ENCODE measurements at regions of chr16 and their contacts with region 1.

Region 1: DNA sequence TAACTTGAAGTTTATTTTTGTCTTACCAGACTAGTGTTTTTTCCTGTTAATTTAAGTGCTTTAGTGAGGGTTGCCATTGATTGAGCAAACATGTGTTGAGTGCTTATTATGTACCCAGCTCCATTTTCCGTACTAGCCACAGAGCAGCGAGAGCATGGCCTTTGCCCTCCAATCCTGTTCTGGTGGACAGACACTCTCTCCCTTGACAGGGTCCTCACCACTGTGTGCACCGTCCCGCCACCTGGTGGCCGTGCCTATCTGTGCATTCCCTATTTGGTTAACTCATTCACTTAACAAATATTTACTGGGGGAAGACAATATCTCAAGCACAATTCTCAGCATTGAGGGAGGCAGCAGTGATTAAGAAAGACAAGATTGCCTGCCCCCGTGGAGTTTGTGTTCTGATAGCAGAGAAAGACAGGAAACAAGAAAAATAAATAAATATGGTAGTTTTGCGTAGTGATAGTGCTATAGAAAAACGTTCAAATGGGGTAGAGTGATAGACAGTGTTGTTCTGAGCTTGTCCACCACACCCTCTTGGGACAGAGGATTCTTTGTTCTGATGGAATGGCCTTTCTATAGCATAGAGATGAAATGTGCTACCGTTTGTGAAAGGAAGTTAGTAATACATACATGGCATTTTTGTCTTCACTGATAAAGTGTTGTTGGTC is 13.0 kb downstream of the CDH13 start:
- DNase-seq: no peak
- H3K4me3 ChIP-seq: no peak overlapping the region
- H3K27ac ChIP-seq: no peak overlapping the region
- H3K27me3 ChIP-seq: no peaks in the 10 kb centered on the region
- CTCF ChIP-seq: peak; percentile 76

Region 2: DNA sequence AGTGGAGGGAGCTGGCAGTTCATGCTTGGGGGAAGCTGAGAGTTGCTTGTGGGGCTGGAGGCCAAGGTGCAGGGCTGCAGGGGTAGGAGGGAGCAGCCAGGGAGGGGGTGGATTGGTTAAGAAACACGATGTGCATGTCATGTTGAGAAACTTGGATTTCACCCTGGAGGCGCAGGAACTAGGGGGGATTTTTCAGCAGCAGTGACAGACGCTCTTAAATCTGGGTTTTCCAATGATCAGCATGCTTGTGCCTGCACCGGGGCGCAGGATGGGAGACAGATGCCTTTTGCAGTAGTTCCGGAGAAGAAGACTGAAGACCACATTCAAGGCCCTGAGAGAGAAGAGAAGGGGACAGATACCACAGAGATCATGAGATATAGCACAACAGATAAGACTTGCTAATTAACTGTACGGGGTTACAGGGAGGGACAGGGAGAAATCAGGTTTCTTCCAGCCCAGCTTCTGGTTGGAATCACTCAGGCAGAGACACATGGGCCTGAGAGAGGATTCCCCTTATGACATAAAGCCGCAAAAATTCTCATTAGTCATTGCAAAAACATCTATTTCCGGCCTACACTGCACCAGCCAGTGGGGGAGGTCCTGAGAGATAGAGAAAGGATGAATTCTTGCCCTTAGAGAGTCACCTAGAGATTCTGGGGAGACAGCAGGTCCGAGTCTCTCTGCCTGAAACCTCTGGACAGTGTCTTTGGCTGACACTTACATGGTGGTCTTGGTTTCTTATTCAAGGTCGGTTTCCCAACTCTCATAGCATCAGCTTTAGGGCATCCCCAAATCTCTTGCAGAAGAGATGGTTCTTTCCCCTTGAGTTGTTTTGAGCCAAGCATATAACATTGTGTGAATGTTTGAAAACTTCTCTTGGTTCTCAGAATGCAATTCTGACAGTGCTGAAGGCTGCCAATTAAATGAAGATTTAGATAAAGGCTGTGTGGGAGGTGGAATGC is 14.0 kb after region 1 on chr16:
- CTCF ChIA-PET with region 1: interaction called, 26 read pairs
- POLR2A ChIA-PET with region 1: interaction called, 4 read pairs
- DNase-seq: peak; percentile 82
- H3K4me3 ChIP-seq: peak overlapping the region; percentile 40
- H3K27ac ChIP-seq: peak overlapping the region; percentile 98
- H3K27me3 ChIP-seq: no peaks in the 10 kb centered on the region
- CTCF ChIP-seq: no peak

Region 3: GRCh38 chr16:82784573-82784968 is 144.8 kb after region 1 on chr16:
- CTCF ChIA-PET with region 1: no interaction called
- POLR2A ChIA-PET with region 1: no interaction called
- DNase-seq: no peak
- H3K4me3 ChIP-seq: no peak overlapping the region
- H3K27ac ChIP-seq: no peak overlapping the region
- H3K27me3 ChIP-seq: no peaks in the 10 kb centered on the region
- CTCF ChIP-seq: no peak

Region 4: GRCh38 chr16:83689385-83689831 is 1049.6 kb after region 1 on chr16:
- CTCF ChIA-PET with region 1: no interaction called
- POLR2A ChIA-PET with region 1: no interaction called
- DNase-seq: peak; percentile 67
- H3K4me3 ChIP-seq: no peak overlapping the region
- H3K27ac ChIP-seq: no peak overlapping the region
- H3K27me3 ChIP-seq: no peaks in the 10 kb centered on the region
- CTCF ChIP-seq: no peak

Measured in AG04450 (cell line).